ENCODE measurements at regions of chr19 and their contacts with region 1.

Region 1: GRCh38 chr19:14479975-14480699 is 5.0 kb upstream of the PTGER1 start:
- DNase-seq: peak; percentile 78
- ATAC-seq: peak; percentile 59
- H3K4me3 Mint-ChIP-seq: no peak overlapping the region
- H3K27ac Mint-ChIP-seq: no peak overlapping the region
- H3K4me1 Mint-ChIP-seq: peaks cover 16% of the 10 kb centered on the region
- H3K27me3 Mint-ChIP-seq: no peaks in the 10 kb centered on the region
- CTCF ChIP-seq: peak; percentile 98

Region 2: DNA sequence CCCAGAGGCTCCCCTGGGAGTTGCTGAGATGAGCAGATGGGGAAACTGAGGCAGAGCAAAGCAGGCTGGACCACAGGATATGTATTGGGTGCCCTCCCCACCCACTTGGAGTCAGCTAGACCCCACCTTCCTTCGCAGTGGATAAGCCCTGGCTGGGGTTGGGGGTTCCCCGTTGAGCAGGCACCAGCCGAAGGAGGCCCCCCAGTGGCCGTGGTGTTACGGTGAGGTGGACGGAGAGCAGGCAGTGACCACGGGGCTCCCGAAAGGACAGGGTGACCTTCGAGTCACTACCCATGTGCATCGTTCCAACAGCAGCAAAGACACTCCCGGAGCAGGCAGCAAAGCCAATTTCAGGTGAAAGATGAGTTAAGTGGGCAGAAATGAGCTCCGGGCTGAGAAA is 161.3 kb before region 1 on chr19:
- CTCF ChIA-PET with region 1: no interaction called
- POLR2A ChIA-PET with region 1: no interaction called
- intact Hi-C with region 1: no loop called
- DNase-seq: peak; percentile 40
- ATAC-seq: no peak
- H3K4me3 Mint-ChIP-seq: no peak overlapping the region
- H3K27ac Mint-ChIP-seq: no peak overlapping the region
- H3K4me1 Mint-ChIP-seq: no peaks in the 10 kb centered on the region
- H3K27me3 Mint-ChIP-seq: no peaks in the 10 kb centered on the region
- CTCF ChIP-seq: no peak

Region 3: DNA sequence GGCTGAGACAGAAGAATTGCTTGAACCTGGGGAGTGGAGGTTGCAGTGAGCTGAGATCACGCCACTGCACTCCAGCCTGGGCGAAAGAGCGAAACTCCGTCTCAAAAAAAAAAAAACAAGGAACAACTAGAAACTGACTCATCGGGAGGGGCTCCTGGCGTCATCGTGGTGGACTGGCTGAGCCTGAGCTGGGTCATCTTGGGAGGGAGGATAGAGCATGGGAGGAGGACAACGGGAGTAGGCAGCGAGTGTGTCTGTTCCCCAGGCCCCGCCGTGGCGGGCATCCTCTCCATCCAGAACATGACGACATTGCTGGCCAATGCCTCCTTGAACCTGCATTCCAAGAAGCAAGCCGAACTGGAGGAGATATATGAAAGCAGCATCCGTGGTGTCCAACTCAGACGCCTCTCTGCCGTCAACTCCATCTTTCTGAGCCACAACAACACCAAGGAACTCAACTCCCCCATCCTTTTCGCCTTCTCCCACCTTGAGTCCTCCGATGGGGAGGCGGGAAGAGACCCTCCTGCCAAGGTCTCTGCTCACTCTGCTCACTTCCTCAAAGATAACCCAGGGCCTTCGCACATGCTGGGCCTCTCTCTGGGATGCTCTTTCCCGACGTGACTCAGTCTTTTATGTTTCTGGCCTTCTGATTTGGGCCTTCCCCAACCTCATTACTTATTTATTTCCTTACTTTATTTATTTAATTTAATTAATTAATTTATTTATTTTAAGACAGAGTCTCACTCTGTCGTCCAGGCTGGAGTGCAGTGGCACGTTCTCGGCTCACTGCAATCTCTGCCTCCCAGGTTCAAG is 77.6 kb before region 1 on chr19:
- CTCF ChIA-PET with region 1: no interaction called
- POLR2A ChIA-PET with region 1: no interaction called
- intact Hi-C with region 1: no loop called
- DNase-seq: no peak
- ATAC-seq: no peak
- H3K4me3 Mint-ChIP-seq: no peak overlapping the region
- H3K27ac Mint-ChIP-seq: no peak overlapping the region
- H3K4me1 Mint-ChIP-seq: peaks cover 4% of the 10 kb centered on the region
- H3K27me3 Mint-ChIP-seq: no peaks in the 10 kb centered on the region
- CTCF ChIP-seq: no peak

Region 4: GRCh38 chr19:14419106-14419813 is 60.9 kb before region 1 on chr19 and contains the start of gene DDX39A:
- CTCF ChIA-PET with region 1: interaction called, 12 read pairs
- POLR2A ChIA-PET with region 1: interaction called, 4 read pairs
- intact Hi-C with region 1: no loop called
- DNase-seq: peak; percentile 99
- ATAC-seq: peak; percentile 93
- H3K4me3 Mint-ChIP-seq: peak within 1 kb of the TSS; percentile 93
- H3K27ac Mint-ChIP-seq: peak within 1 kb of the TSS; percentile 98
- H3K4me1 Mint-ChIP-seq: peaks cover 27% of the 10 kb centered on the region
- H3K27me3 Mint-ChIP-seq: no peaks in the 10 kb centered on the region
- CTCF ChIP-seq: no peak
- total RNA-seq, gene DDX39A: 217 to 226 TPM

Region 5: DNA sequence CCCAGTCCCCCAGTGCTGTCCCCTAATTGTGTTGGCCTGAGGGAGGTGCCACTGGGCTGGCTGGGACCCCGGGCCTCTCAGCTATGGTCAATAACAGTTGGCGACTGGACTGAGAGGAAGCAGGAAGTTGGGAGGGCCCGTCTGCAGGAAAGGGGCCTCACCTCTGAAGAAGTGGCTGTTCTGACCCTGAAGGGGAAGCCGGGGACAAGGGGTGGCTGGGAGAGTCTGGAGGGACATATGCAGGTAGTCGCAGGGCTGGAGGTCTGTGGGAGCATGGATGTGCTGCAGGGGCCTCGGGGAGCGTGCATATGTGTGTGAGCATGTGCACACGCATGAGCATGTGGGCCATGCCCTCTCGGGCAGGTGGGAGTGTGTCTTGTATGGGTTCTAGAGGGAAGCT is 41.1 kb before region 1 on chr19:
- CTCF ChIA-PET with region 1: interaction called, 13 read pairs
- POLR2A ChIA-PET with region 1: no interaction called
- intact Hi-C with region 1: loop called (anchors 5 kb)
- DNase-seq: no peak
- ATAC-seq: no peak
- H3K4me3 Mint-ChIP-seq: peak overlapping the region; percentile 82
- H3K27ac Mint-ChIP-seq: peak overlapping the region; percentile 92
- H3K4me1 Mint-ChIP-seq: peaks cover 41% of the 10 kb centered on the region
- H3K27me3 Mint-ChIP-seq: no peaks in the 10 kb centered on the region
- CTCF ChIP-seq: no peak

Region 6: DNA sequence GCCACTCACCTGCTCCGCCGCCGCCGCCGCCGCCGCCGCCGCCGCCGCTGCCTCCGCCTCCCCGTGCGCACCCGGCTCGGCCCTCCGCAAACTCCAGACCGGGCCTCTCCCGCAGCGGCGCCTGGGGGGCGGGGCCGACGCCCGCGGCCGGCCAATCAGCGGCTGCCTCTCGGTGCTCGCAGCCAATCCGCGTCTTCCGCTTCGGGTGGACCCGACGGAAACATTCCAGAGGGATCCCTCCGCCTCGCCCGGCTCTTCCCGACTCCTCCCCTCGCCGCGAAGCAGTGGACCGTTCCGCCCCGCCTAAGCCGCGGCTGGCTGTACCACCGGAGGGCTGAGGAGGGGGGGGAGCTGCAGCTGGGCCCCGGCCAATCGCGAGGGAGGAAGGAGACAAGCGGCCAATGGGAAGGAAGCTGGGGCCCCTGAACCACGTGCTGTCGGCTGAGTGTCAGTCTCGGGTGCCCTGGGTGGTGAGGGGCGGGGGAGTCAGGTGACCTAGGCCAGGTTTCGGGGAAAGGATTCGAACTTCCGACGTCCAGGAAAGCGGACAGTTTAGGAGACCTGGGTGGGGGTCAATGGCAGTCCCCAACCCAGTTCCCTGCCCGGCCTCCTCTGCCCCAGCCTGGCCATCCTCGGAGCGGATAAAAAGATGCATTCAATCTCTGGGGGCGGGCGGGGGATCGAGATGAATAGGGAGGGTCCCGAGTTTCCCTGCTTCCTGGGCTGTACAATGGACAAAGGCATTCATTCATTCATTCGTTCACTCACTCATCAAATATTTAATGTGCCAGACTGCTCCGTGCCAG is 16.1 kb after region 1 on chr19 and contains the start of gene GIPC1:
- CTCF ChIA-PET with region 1: interaction called, 37 read pairs
- POLR2A ChIA-PET with region 1: interaction called, 3 read pairs
- intact Hi-C with region 1: no loop called
- DNase-seq: peak; percentile 80
- ATAC-seq: peak; percentile 90
- H3K4me3 Mint-ChIP-seq: peak within 1 kb of the TSS; percentile 79
- H3K27ac Mint-ChIP-seq: peak within 1 kb of the TSS; percentile 49
- H3K4me1 Mint-ChIP-seq: peaks cover 18% of the 10 kb centered on the region
- H3K27me3 Mint-ChIP-seq: no peaks in the 10 kb centered on the region
- CTCF ChIP-seq: no peak
- total RNA-seq, gene GIPC1: 17.3 to 19.6 TPM

Measured in activated CD8-positive, alpha-beta T cell treated with anti-CD3 and anti-CD28 coated beads for 36 hours (primary cell).